Natural killer cell (primary cell): ENCODE measurements at regions of chr15 and their contacts with region 1.

Region 1: GRCh38 chr15:25933456-25934158 is 70.5 kb upstream of the ATP10A start:
- DNase-seq: peak; percentile 49 to 84
- ATAC-seq: peak; percentile 85 to 99 (median 99)
- H3K4me3 ChIP-seq: peak overlapping the region; percentile 37
- H3K4me3 Mint-ChIP-seq: peak overlapping the region; percentile 91
- H3K27ac ChIP-seq: no peak overlapping the region
- H3K27ac Mint-ChIP-seq: no peak overlapping the region
- H3K4me1 ChIP-seq: peaks cover 11% of the 10 kb centered on the region
- H3K4me1 Mint-ChIP-seq: peaks cover 5 to 8% of the 10 kb centered on the region in 2 donors
- H3K27me3 ChIP-seq: no peaks in the 10 kb centered on the region
- H3K27me3 Mint-ChIP-seq: peaks cover 11 to 21% of the 10 kb centered on the region in 2 donors
- CTCF ChIP-seq: peak; percentile 78

Region 2: GRCh38 chr15:25510146-25510545 is 423.5 kb before region 1 on chr15:
- intact Hi-C with region 1: loop called (anchors 10 kb)
- DNase-seq: no peak
- ATAC-seq: no peak
- H3K4me3 ChIP-seq: no peak overlapping the region
- H3K4me3 Mint-ChIP-seq: no peak overlapping the region
- H3K27ac ChIP-seq: no peak overlapping the region
- H3K27ac Mint-ChIP-seq: no peak overlapping the region
- H3K4me1 ChIP-seq: no peaks in the 10 kb centered on the region
- H3K4me1 Mint-ChIP-seq: no peaks in the 10 kb centered on the region
- H3K27me3 ChIP-seq: no peaks in the 10 kb centered on the region
- H3K27me3 Mint-ChIP-seq: no peaks in the 10 kb centered on the region
- CTCF ChIP-seq: no peak

Region 3: DNA sequence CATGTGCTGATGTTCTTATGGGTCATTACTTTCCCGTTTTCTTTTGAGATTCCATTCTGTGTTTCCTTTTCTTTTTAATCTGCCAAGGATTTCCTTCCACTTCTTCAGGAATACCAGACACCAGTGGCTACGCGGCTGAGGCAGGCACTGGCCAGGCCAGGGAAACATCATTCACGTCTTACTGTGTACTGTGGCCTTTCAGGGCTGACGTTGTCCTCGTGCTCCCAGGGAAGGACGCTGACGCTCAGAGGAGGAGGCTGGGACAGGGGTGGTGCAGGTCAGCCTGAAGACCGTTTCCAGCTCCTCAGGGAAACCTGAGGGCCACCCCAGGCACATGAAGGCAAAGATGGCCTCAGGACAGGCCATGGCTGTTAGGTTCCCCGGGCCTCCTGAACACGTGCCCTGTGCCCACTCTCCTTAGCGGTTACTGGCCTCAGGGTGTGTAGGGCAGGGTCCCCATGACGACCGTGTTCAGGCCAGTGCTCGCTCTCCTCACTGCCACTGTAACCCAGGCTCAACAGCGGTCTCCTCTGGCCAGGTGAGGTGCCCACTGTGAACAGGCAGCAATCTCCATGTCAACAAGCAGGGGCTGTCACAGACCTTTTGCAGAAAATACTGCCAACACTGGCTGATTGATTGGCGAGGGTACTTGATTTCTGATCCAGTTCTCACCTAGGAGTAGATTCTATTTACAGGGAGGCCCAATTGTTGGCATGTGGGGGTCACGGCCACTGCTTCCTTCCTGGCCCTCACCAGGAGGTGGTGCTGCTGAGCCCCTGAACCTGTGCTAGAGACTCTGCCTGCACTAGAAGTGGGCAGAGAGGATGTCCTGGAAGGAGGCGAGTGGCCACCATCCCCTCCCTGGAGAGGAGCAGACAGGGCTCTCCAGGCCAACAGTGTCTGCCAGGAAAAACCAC is 240.0 kb before region 1 on chr15:
- intact Hi-C with region 1: loop called (anchors 1 kb)
- DNase-seq: peak in 1 of 2 donors; percentile 46
- ATAC-seq: peak; percentile 40 to 67 (median 57)
- H3K4me3 ChIP-seq: no peak overlapping the region
- H3K4me3 Mint-ChIP-seq: no peak overlapping the region
- H3K27ac ChIP-seq: no peak overlapping the region
- H3K27ac Mint-ChIP-seq: no peak overlapping the region
- H3K4me1 ChIP-seq: no peaks in the 10 kb centered on the region
- H3K4me1 Mint-ChIP-seq: peaks cover 4 to 11% of the 10 kb centered on the region in 2 donors
- H3K27me3 ChIP-seq: no peaks in the 10 kb centered on the region
- H3K27me3 Mint-ChIP-seq: no peaks in the 10 kb centered on the region
- CTCF ChIP-seq: peak; percentile 58

Region 4: GRCh38 chr15:25739687-25740121 is 193.9 kb before region 1 on chr15:
- intact Hi-C with region 1: loop called (anchors 1 kb)
- DNase-seq: peak in 1 of 2 donors; percentile 64
- ATAC-seq: peak; percentile 64 to 81 (median 70)
- H3K4me3 ChIP-seq: no peak overlapping the region
- H3K4me3 Mint-ChIP-seq: no peak overlapping the region
- H3K27ac ChIP-seq: no peak overlapping the region
- H3K27ac Mint-ChIP-seq: peak overlapping the region in 1 of 2 donors; percentile 31
- H3K4me1 ChIP-seq: peaks cover 16% of the 10 kb centered on the region
- H3K4me1 Mint-ChIP-seq: peaks cover 54 to 58% of the 10 kb centered on the region in 2 donors
- H3K27me3 ChIP-seq: no peaks in the 10 kb centered on the region
- H3K27me3 Mint-ChIP-seq: no peaks in the 10 kb centered on the region
- CTCF ChIP-seq: peak; percentile 22

Region 5: GRCh38 chr15:25787855-25788520 is 145.6 kb before region 1 on chr15:
- intact Hi-C with region 1: loop called (anchors 1 kb)
- DNase-seq: no peak
- ATAC-seq: peak; percentile 33 to 69 (median 63)
- H3K4me3 ChIP-seq: no peak overlapping the region
- H3K4me3 Mint-ChIP-seq: no peak overlapping the region
- H3K27ac ChIP-seq: no peak overlapping the region
- H3K27ac Mint-ChIP-seq: peak overlapping the region; percentile 22 to 63
- H3K4me1 ChIP-seq: peaks cover 46% of the 10 kb centered on the region
- H3K4me1 Mint-ChIP-seq: peaks cover 71 to 78% of the 10 kb centered on the region in 2 donors
- H3K27me3 ChIP-seq: no peaks in the 10 kb centered on the region
- H3K27me3 Mint-ChIP-seq: no peaks in the 10 kb centered on the region
- CTCF ChIP-seq: no peak

Region 6: GRCh38 chr15:25967126-25967525 is 33.5 kb after region 1 on chr15:
- intact Hi-C with region 1: no loop called
- DNase-seq: no peak
- ATAC-seq: no peak
- H3K4me3 ChIP-seq: no peak overlapping the region
- H3K4me3 Mint-ChIP-seq: no peak overlapping the region
- H3K27ac ChIP-seq: no peak overlapping the region
- H3K27ac Mint-ChIP-seq: no peak overlapping the region
- H3K4me1 ChIP-seq: no peaks in the 10 kb centered on the region
- H3K4me1 Mint-ChIP-seq: no peaks in the 10 kb centered on the region
- H3K27me3 ChIP-seq: no peaks in the 10 kb centered on the region
- H3K27me3 Mint-ChIP-seq: peaks cover 0 to 7% of the 10 kb centered on the region in 2 donors
- CTCF ChIP-seq: no peak